ENCODE measurements at regions of chr1 and their contacts with region 1.

Region 1: DNA sequence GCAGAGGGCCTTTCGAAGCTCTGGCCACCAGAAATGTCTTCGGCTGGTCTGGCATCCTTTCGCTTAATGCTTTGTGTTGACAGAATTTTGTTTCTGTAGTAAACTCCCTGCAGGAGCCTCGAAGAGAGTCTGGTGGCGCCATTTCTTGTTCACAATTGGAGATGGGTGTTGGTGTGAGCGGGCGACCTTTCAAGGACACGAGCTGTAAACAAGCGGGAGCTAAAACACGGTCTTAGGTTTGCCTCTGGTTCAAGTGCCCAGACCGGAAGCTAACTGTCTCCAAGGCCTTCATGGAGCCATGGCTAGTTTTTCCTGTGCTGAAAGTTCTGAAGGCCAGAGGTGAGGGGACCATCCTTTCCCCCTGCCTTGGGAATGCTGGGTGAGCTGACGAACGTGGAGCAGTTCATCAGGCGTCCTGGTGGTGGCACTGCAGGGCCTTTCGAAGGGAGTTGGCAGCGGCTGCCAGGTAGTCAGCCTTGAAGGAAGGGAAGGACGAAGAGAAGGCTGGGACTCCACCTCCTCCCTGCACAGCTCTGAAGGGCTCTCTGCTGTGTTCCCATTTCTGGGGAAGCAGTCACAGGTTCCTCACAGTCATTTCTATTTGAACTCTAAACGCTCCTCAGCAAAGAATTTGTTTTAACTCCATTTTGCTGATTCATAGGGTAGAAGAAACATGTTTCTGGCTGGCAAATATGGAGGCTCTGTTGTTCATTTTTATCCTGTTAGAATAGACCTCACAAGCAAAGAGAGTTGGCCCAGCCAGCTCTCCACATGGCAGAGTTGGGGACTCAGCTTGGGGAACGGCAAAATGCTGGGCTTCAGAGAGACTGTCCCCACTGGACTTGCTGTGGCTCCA is 35.2 kb downstream of the URB2 start:
- DNase-seq: peak; percentile 89
- ATAC-seq: peak; percentile 97

Region 2: DNA sequence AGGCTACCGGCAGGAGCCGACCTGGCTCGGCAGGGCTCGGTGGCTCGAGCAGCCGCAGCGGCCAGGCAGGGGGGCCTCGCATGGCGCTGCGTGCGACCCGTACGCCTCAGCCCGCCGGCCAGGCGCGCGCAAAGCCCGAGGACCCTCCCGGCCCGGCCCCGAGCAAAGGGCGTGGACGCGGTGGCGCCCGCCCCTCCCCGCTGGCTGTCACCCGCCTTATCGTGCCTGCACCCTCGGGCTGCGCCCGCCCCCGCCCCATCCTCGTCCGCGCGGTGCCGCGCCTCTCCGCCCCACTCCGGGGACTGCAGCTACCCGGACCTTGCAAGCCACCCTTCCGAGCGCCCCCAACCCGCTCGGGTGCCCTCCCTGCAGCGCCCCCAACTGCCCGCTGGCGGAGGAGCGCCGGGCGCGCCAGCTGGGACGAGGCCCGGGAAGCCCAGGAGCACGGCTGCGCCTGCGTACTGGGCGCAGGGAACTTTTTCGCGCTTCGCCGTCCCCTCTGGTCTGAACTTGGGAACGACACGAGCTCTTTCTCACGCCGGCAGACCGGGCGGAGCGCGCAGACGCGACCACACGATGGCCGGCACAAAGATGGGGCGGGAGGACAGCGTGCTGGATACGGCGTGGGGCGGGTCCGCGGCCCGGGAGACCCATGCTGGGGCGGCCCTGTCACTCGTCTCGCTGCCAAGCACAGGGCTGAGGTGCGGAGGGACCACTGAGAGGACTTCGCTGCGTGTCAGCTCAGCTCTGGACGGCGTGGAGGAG is 102.5 kb before region 1 on chr1 and contains the start of gene ABCB10:
- intact Hi-C with region 1: no loop called
- DNase-seq: peak; percentile 98
- ATAC-seq: peak; percentile 95
- total RNA-seq, gene ABCB10: 11.3 TPM

Region 3: GRCh38 chr1:229599218-229599954 is 61.9 kb before region 1 on chr1:
- intact Hi-C with region 1: no loop called
- DNase-seq: no peak
- ATAC-seq: no peak

Region 4: DNA sequence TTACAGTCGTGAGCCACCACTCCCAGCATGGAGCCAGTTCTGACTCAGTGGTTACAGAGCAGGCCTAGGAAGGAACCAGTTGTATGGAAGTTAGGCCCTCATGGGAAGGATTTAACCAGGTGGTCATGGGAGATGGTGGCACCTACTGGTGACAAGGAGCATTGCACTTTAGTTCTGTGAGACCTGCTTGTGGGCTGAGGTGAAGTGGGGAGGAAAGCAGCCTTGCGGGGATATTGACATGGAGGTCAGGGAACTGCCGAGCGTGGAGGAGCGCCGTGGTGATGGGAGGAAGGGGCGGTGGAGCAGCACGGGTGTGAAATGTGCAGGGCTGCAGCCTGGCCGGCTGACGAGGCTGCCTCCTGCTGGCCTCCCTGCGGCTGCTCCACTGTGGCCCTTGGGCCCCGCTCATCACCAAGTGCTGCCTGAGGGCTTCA is 506.2 kb after region 1 on chr1:
- intact Hi-C with region 1: loop called (anchors 5 kb)
- DNase-seq: peak; percentile 32
- ATAC-seq: peak; percentile 38

Region 5: DNA sequence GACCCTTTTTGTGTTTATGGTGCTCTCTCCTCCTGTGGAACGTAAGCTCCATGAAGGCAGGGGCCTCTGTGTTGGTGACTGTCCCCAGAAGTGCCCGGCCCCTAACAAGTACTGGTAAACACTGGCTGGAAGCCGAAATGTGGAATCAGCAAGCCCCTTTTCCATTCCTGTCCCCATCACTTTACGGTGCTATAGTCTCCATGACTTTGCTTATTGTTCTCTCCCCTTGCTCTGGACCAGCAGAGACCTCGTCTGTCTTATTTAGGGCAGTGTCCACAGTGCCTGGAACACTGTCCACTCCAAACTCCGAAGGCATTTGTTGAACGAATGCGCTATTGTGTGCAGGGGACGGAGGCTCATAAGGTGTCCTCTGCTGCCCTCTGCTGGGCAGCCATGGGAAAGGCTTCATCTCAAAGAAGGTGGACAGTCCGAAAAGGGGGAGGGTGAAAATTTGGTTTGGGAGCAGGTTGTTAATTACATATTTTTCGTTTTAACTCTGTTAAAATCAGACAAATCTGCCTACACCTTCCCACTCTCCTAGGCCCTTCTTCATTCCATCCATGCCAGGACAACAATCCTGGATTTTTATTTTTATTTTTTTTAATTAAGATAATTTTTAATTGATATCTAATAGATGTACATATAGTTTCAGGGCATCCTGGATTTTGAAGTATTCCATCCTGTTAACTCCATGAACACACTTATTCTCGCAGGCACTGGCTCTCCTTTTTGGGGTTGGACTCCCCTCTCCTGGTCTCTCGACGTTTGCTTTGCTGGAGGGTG is 649.3 kb after region 1 on chr1:
- intact Hi-C with region 1: loop called (anchors 2 kb)
- DNase-seq: peak; percentile 88
- ATAC-seq: peak; percentile 94